Lower leg skin (tissue), 4 donors: ENCODE measurements at regions of chr5 and their contacts with region 1.

Region 1: GRCh38 chr5:77798456-77798855 is 22.3 kb upstream of the TBCA start:
- DNase-seq: no peak
- H3K4me3 ChIP-seq: no peak overlapping the region
- CTCF ChIP-seq: no peak
- POLR2A ChIP-seq: no peak

Region 2: DNA sequence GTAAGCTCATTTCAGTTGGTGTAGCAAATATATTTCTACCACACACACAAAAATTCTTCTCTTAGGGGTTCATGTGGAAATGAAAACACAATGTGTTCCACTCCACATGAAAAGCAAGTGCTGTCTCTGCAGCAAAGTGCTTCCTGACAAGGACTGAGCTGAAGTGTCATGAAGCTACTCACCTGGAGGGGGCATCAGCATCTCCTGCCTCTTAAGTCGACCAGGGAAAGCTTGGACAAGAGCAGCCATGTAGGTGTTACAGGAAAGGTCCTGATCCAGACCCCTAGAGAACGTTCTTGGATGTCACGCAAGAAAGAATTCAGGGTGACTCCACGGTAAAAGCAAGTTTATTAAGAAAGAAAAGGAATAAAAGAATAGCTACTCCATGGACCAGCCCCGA is 1652.5 kb before region 1 on chr5:
- intact Hi-C with region 1: loop called (anchors 5 kb)
- DNase-seq: no peak
- H3K4me3 ChIP-seq: no peak overlapping the region
- CTCF ChIP-seq: no peak
- POLR2A ChIP-seq: no peak

Region 3: GRCh38 chr5:77733130-77733529 is 65.3 kb before region 1 on chr5:
- intact Hi-C with region 1: no loop called
- DNase-seq: no peak
- H3K4me3 ChIP-seq: no peak overlapping the region
- CTCF ChIP-seq: no peak
- POLR2A ChIP-seq: no peak